Tibial artery (tissue), 4 donors: ENCODE measurements at regions of chr4 and their contacts with region 1.

Region 1: DNA sequence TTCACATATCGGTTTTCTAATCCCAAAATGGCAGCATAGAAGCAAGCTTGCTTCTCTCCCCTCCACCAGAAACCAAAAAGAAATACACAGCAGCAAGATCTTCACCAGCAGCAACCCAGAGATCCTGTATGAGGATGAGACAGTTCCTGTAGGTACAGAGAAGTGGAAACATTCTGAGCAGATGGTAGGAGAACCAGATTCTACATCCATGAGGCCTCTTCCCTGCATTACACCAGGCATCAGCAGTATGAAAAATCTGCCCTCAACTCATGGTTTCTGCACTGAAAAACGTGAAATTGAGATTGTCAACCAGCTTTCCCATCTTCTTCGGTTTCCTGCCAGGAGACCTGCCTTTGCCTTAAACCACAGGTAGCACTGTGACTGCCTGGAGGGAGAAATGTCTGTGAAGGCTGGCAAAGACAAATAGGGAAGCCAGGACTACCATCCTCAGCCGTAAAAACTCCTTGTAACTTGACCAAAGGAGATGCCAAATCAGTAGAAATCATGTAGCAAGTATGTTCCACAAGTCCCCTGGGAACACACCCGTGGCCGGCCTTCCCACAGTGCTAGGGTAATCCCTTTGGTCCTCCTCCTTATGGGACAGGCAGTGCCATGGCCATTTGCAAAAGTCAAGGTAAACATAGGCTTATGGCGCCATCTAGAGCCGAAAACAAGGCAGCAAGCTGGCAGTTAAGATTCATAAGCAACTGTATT is 24.0 kb upstream of the MTHFD2L start:
- DNase-seq: peak; percentile 84 to 89
- H3K4me3 ChIP-seq: no peak overlapping the region
- H3K27ac ChIP-seq: no peak overlapping the region
- H3K4me1 ChIP-seq: peaks cover 0 to 11% (median 5%) of the 10 kb centered on the region in 4 donors
- H3K27me3 ChIP-seq: no peaks in the 10 kb centered on the region
- CTCF ChIP-seq: peak; percentile 77 to 81

Region 2: GRCh38 chr4:73662709-73663546 is 471.0 kb before region 1 on chr4:
- intact Hi-C with region 1: loop called (anchors 5 kb)
- DNase-seq: no peak
- H3K4me3 ChIP-seq: no peak overlapping the region
- H3K27ac ChIP-seq: no peak overlapping the region
- H3K4me1 ChIP-seq: no peaks in the 10 kb centered on the region
- H3K27me3 ChIP-seq: no peaks in the 10 kb centered on the region
- CTCF ChIP-seq: peak; percentile 40 to 61

Region 3: GRCh38 chr4:73729534-73730165 is 404.3 kb before region 1 on chr4:
- intact Hi-C with region 1: loop called (anchors 10 kb)
- DNase-seq: peak; percentile 84 to 85
- H3K4me3 ChIP-seq: no peak overlapping the region
- H3K27ac ChIP-seq: peak overlapping the region in 1 of 2 donors; percentile 9
- H3K4me1 ChIP-seq: peaks cover 0 to 16% (median 3%) of the 10 kb centered on the region in 4 donors
- H3K27me3 ChIP-seq: no peaks in the 10 kb centered on the region
- CTCF ChIP-seq: peak; percentile 76 to 86

Region 4: DNA sequence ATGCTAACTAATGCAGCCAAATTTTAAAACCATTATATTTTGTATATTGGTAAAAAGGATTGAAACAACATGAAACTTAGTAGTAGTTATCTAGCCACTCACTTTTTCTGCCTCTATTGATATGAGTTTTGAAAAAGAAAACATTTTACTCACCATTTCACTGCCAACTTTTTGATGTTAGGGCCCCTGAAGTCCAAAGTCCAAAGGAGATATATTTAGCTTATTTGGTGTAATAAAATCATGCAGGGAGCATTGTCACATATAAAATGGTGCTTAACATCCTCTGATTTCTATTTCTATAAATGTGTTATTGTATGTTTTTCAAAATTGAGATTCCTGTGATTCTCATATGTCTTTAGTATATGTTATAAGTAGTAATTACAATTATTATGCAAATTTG is 71.0 kb before region 1 on chr4:
- intact Hi-C with region 1: no loop called
- DNase-seq: no peak
- H3K4me3 ChIP-seq: no peak overlapping the region
- H3K27ac ChIP-seq: no peak overlapping the region
- H3K4me1 ChIP-seq: no peaks in the 10 kb centered on the region
- H3K27me3 ChIP-seq: no peaks in the 10 kb centered on the region
- CTCF ChIP-seq: no peak

Region 5: DNA sequence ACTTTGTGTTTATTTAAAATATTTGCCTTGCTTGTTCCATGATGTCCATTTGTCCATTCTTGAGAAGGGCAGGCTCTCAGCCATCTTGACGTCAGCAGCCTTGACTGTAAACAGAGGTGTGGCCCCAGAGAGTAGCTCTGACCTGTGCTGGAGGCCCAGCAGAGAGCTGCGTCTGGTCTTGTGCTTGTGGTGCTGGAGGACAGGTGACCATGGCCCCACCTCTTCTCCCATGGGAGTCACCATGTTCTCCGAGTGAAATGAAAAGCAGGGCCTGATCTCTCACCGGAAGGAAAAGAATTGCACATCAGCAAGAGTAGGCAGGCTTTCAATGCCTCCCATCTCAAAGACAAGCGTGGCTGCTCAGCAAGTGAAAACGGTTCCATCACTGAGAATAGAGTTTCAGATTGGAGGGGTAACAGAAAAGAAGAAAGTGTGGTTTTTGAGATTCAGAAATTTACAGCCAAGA is 810.4 kb after region 1 on chr4:
- intact Hi-C with region 1: no loop called
- DNase-seq: no peak
- H3K4me3 ChIP-seq: no peak overlapping the region
- H3K27ac ChIP-seq: peak overlapping the region in 1 of 2 donors; percentile 49
- H3K4me1 ChIP-seq: peaks cover 0 to 64% (median 4%) of the 10 kb centered on the region in 4 donors
- H3K27me3 ChIP-seq: no peaks in the 10 kb centered on the region
- CTCF ChIP-seq: no peak